MCF 10A (cell line): ENCODE measurements at regions of chr15 and their contacts with region 1.

Region 1: DNA sequence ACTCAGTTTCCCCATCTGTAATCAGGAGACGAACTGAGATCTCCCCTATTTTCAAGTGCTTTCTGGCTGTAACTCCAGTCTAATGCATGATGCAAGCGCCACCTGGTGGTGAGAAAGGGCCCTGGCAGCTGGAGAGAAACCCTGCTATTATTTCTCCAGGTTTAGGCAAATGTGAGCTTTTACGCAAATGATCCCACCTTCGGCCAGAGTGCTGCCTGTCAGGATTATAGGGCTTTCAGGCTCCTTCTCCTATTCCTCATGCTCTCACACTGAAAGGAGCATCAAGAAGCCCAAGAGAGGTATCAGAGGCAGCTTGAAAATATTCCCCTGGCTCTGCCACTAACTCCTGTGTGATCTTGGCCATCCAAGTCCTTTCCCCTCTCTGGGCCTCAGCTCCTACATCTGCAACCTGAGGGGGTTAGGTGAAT is 93.9 kb upstream of the RASGRF1 start:
- DNase-seq: peak; percentile 71
- H3K4me3 Mint-ChIP-seq: no peak overlapping the region
- H3K27ac Mint-ChIP-seq: no peak overlapping the region
- H3K4me1 Mint-ChIP-seq: no peaks in the 10 kb centered on the region
- H3K27me3 Mint-ChIP-seq: no peaks in the 10 kb centered on the region
- CTCF ChIP-seq: peak; percentile 83

Region 2: GRCh38 chr15:78757636-78757905 is 426.9 kb before region 1 on chr15:
- CTCF ChIA-PET with region 1: interaction called, 3 read pairs
- POLR2A ChIA-PET with region 1: no interaction called
- intact Hi-C with region 1: loop called (anchors 2 kb)
- DNase-seq: no peak
- H3K4me3 Mint-ChIP-seq: no peak overlapping the region
- H3K27ac Mint-ChIP-seq: no peak overlapping the region
- H3K4me1 Mint-ChIP-seq: peaks cover 17% of the 10 kb centered on the region
- H3K27me3 Mint-ChIP-seq: no peaks in the 10 kb centered on the region
- CTCF ChIP-seq: no peak

Region 3: GRCh38 chr15:78909791-78910228 is 274.7 kb before region 1 on chr15:
- CTCF ChIA-PET with region 1: interaction called, 51 read pairs
- POLR2A ChIA-PET with region 1: no interaction called
- intact Hi-C with region 1: loop called (anchors 1 kb)
- DNase-seq: peak; percentile 66
- H3K4me3 Mint-ChIP-seq: no peak overlapping the region
- H3K27ac Mint-ChIP-seq: no peak overlapping the region
- H3K4me1 Mint-ChIP-seq: peaks cover 9% of the 10 kb centered on the region
- H3K27me3 Mint-ChIP-seq: no peaks in the 10 kb centered on the region
- CTCF ChIP-seq: peak; percentile 48

Region 4: DNA sequence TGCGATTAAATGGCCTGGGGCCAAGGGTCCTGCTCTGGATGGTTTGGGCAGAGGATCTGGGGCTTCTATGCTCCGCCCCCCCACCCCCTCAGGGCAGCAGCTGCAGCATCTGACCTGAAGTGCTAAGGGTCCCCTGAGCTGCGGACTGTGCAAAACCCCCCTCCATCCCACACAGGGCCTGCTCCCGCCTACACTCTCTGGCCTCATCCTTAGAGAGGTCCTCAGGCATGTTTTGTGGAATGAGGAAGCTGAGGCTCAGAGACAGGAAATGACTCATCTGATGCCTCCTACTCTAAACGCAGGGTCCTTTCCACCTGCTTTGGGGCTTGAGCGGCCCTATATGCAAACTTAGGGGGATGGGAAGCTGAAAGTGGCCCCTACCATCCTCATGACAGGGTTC is 180.1 kb before region 1 on chr15:
- CTCF ChIA-PET with region 1: interaction called, 11 read pairs
- POLR2A ChIA-PET with region 1: no interaction called
- intact Hi-C with region 1: no loop called
- DNase-seq: peak; percentile 74
- H3K4me3 Mint-ChIP-seq: no peak overlapping the region
- H3K27ac Mint-ChIP-seq: peak overlapping the region; percentile 54
- H3K4me1 Mint-ChIP-seq: peaks cover 16% of the 10 kb centered on the region
- H3K27me3 Mint-ChIP-seq: no peaks in the 10 kb centered on the region
- CTCF ChIP-seq: no peak

Region 5: DNA sequence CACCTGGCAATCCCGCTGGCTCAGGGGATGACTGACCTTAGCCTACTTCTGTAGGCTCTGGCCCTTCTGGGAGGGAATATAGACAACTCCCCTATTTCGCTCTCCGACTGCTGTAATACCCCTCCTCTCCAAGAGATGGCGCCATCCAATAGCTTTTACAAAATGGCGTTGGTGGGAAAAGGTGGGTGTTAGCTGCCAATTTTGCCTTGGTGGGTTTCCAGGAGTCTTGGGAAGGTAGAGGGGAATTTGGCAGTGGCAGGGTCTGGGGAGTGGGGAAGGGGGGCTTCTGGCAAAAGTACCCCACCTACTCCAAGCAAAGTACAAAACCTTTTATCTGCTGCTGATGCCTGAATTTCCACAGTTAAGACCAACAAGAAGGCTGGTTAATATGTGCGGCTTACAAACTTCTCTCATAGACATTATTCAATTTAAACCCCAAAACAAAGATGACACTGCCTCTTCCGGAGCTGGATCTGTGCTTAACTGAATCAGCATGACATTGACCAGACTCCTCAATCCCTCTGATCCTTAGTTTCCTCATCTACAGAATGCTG is 156.0 kb before region 1 on chr15:
- CTCF ChIA-PET with region 1: interaction called, 333 read pairs
- POLR2A ChIA-PET with region 1: no interaction called
- intact Hi-C with region 1: loop called (anchors 1 kb)
- DNase-seq: peak; percentile 70
- H3K4me3 Mint-ChIP-seq: no peak overlapping the region
- H3K27ac Mint-ChIP-seq: no peak overlapping the region
- H3K4me1 Mint-ChIP-seq: no peaks in the 10 kb centered on the region
- H3K27me3 Mint-ChIP-seq: no peaks in the 10 kb centered on the region
- CTCF ChIP-seq: peak; percentile 81

Region 6: GRCh38 chr15:79157631-79158592 is 26.6 kb before region 1 on chr15:
- CTCF ChIA-PET with region 1: interaction called, 17 read pairs
- POLR2A ChIA-PET with region 1: no interaction called
- intact Hi-C with region 1: no loop called
- DNase-seq: peak; percentile 83
- H3K4me3 Mint-ChIP-seq: no peak overlapping the region
- H3K27ac Mint-ChIP-seq: peak overlapping the region; percentile 55
- H3K4me1 Mint-ChIP-seq: peaks cover 7% of the 10 kb centered on the region
- H3K27me3 Mint-ChIP-seq: no peaks in the 10 kb centered on the region
- CTCF ChIP-seq: no peak

Region 7: GRCh38 chr15:79172801-79173460 is 11.5 kb before region 1 on chr15:
- CTCF ChIA-PET with region 1: interaction called, 26 read pairs
- POLR2A ChIA-PET with region 1: interaction called, 3 read pairs
- intact Hi-C with region 1: no loop called
- DNase-seq: no peak
- H3K4me3 Mint-ChIP-seq: no peak overlapping the region
- H3K27ac Mint-ChIP-seq: no peak overlapping the region
- H3K4me1 Mint-ChIP-seq: peaks cover 21% of the 10 kb centered on the region
- H3K27me3 Mint-ChIP-seq: no peaks in the 10 kb centered on the region
- CTCF ChIP-seq: no peak